ENCODE measurements at regions of chr1 and their contacts with region 1.

Region 1: DNA sequence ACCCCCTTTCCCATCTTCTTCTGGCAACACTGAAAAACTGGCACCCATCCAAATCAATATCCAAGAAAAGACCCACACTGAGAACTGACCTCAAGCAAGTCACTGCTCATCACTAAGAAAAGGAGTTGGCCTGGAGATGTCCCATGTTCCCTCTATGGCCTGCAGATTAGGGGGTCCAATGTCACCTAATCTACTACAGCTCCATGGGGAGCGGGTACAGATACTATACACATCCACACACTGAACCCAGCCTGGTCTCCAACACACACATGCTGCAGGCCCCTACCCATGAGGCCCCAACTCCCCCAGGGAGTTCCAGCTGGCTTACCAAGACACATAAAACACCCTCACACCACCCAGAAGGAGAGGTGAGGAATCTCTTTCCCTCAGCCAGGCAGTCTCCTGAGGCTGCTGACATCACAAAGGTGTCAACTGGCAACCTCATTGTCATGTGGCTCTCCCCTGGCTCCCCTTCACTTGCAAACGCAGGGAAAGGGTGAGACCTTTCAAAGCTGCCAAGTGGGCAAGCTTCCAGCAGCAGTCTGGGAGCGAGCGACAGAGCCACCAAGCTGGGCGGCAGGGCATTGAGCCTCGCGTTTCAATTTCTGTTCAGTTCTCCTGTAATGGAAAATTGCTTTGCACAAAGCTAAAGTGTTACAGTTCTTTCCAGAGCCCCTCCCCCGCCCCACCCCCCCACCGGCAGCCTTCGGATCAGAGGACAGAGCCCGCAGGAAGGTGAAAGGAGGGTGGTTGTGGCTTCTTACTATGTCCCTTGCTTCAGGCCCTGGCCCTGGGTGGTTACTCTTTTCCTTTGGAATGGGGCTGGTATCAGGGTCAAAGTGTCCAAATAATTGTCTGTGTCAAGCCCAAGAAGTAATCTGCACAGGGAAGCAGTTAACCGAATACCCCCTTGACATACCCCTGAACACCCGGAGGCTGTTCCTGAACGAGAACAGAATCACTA is at the start of gene LRRC52:
- DNase-seq: peak; percentile 87
- total RNA-seq, gene LRRC52: not detected

Region 2: GRCh38 chr1:165403835-165404482 is 139.9 kb before region 1 on chr1:
- intact Hi-C with region 1: loop called (anchors 1 kb)
- DNase-seq: no peak

Region 3: DNA sequence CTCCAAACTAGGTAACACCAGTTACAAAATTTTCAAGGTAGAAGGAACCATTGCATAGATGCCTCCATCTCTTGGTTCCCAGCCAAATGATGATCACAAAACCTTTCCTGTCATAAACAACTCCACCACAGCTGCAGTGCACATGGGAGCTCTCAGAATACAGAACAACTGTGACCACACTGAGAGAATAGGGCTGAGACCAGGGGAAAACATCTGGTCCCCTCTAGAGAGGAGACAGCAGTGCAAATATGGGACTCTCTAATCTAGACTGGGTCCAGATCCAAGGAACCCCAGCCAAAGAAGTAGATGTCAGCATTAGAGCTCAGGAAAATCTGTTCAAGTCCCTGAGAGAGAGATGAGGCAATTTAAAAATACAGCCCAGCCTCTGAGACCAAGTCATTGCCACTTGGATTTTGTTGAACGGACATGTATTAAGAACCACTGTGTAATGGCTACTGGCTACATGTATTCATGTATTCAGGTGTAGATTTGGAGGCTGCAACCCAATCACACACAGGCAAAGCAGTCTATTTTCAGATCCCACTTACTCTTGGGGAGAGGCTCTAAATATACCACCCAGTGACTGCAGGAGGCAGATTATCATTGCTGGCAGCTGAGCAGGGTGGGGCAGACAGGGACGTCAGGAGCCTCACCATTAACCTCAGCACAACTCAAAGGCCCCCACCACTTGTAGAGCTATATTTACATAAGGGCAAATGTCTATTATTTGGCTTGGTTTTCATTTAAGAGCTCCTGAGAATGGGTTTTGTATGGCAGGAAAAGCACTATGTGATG is 91.3 kb before region 1 on chr1:
- intact Hi-C with region 1: loop called (anchors 5 kb)
- DNase-seq: no peak

Region 4: GRCh38 chr1:165560883-165561656 is 17.3 kb after region 1 on chr1:
- intact Hi-C with region 1: no loop called
- DNase-seq: no peak